HepG2 (cell line): ENCODE measurements at regions of chr21 and their contacts with region 1.

Region 1: GRCh38 chr21:34888569-34889319 is 160.4 kb downstream of the RUNX1 start:
- DNase-seq: peak; percentile 90
- ATAC-seq: peak; percentile 79
- H3K4me3 ChIP-seq: peak overlapping the region; percentile 86 to 96 (median 94)
- H3K27ac ChIP-seq: peak overlapping the region; percentile 87
- H3K4me1 ChIP-seq: peaks cover 16% of the 10 kb centered on the region
- H3K27me3 ChIP-seq: no peaks in the 10 kb centered on the region; a peak in 1 of 5 replicates
- CTCF ChIP-seq: no peak
- EP300 ChIP-seq: peak in 1 of 2 experiments; percentile 12; a peak in 1 of 4 replicates
- POLR2A ChIP-seq: peak in 1 of 2 experiments; percentile 97; a peak in 2 of 4 replicates
- RAD21 ChIP-seq: peak; percentile 37; the same call in 1 of the 2 replicates

Region 2: DNA sequence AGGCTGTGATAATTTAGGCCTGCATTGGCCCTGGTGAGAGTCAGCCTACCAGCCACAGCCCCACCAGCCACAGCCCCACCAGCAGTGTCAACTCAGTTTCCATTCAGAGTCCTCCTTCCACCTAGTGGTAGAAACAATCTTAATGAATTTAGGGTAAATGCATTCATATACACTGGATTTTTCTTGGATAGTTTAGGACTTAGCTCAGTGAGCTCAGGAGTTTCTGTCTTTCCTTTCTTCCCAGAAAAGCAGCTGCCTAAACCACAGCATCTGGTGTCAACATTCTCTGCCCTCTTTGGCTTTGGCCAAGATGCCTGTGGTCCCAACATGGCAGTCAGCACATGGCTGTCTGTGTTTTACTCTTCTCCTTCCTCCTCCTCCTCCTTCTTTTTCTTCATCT is 126.0 kb before region 1 on chr21:
- CTCF ChIA-PET with region 1: no interaction called
- POLR2A ChIA-PET with region 1: no interaction called
- in situ Hi-C with region 1: no loop called
- intact Hi-C with region 1: no loop called
- DNase-seq: no peak
- ATAC-seq: no peak
- H3K4me3 ChIP-seq: no peak overlapping the region
- H3K27ac ChIP-seq: no peak overlapping the region
- H3K4me1 ChIP-seq: peaks cover 12% of the 10 kb centered on the region
- H3K27me3 ChIP-seq: no peaks in the 10 kb centered on the region
- CTCF ChIP-seq: no peak
- EP300 ChIP-seq: no peak
- POLR2A ChIP-seq: no peak
- RAD21 ChIP-seq: no peak

Region 3: GRCh38 chr21:34795175-34795547 is 93.6 kb before region 1 on chr21:
- CTCF ChIA-PET with region 1: no interaction called
- POLR2A ChIA-PET with region 1: interaction called, 47 read pairs
- in situ Hi-C with region 1: loop called (anchors 5 kb)
- intact Hi-C with region 1: loop called (anchors 5 kb)
- DNase-seq: no peak
- ATAC-seq: no peak; the same call in 2 of the 3 replicates
- H3K4me3 ChIP-seq: peak overlapping the region in 1 of 3 experiments; percentile 4; a peak in 1 of 6 replicates
- H3K27ac ChIP-seq: peak overlapping the region; percentile 66
- H3K4me1 ChIP-seq: peaks cover 83% of the 10 kb centered on the region
- H3K27me3 ChIP-seq: no peaks in the 10 kb centered on the region
- CTCF ChIP-seq: 0 out of 2 replicates have a peak, but pooled peaks have one; percentile 11
- EP300 ChIP-seq: no peak
- POLR2A ChIP-seq: no peak
- RAD21 ChIP-seq: no peak

Region 4: GRCh38 chr21:34836103-34836932 is 52.4 kb before region 1 on chr21:
- CTCF ChIA-PET with region 1: no interaction called
- POLR2A ChIA-PET with region 1: interaction called, 92 read pairs
- in situ Hi-C with region 1: no loop called
- intact Hi-C with region 1: no loop called
- DNase-seq: peak; percentile 92
- ATAC-seq: peak; percentile 92
- H3K4me3 ChIP-seq: peak overlapping the region; percentile 19 to 45 (median 21)
- H3K27ac ChIP-seq: peak overlapping the region; percentile 92
- H3K4me1 ChIP-seq: peaks cover 54% of the 10 kb centered on the region
- H3K27me3 ChIP-seq: no peaks in the 10 kb centered on the region
- CTCF ChIP-seq: no peak
- EP300 ChIP-seq: peak; percentile 48 to 87; a peak in 2 of 4 replicates
- POLR2A ChIP-seq: peak in 1 of 2 experiments; percentile 37; a peak in 1 of 4 replicates
- RAD21 ChIP-seq: 0 out of 2 replicates have a peak, but pooled peaks have one; percentile 6

Region 5: GRCh38 chr21:34926803-34927467 is 38.2 kb after region 1 on chr21:
- CTCF ChIA-PET with region 1: no interaction called
- POLR2A ChIA-PET with region 1: no interaction called
- in situ Hi-C with region 1: no loop called
- intact Hi-C with region 1: no loop called
- DNase-seq: peak; percentile 72
- ATAC-seq: peak; percentile 97
- H3K4me3 ChIP-seq: peak overlapping the region in 1 of 3 experiments; percentile 9; a peak in 1 of 6 replicates
- H3K27ac ChIP-seq: no peak overlapping the region
- H3K4me1 ChIP-seq: peaks cover 28% of the 10 kb centered on the region
- H3K27me3 ChIP-seq: no peaks in the 10 kb centered on the region
- CTCF ChIP-seq: no peak
- EP300 ChIP-seq: 0 out of 4 replicates have a peak, but pooled peaks of 1 of the 2 experiments have one; percentile 3
- POLR2A ChIP-seq: no peak
- RAD21 ChIP-seq: no peak

Region 6: GRCh38 chr21:34986561-34987500 is 98.1 kb after region 1 on chr21:
- CTCF ChIA-PET with region 1: no interaction called
- POLR2A ChIA-PET with region 1: no interaction called
- in situ Hi-C with region 1: loop called (anchors 10 kb)
- intact Hi-C with region 1: no loop called
- DNase-seq: peak; percentile 84
- ATAC-seq: peak; percentile 69
- H3K4me3 ChIP-seq: no peak overlapping the region
- H3K27ac ChIP-seq: no peak overlapping the region
- H3K4me1 ChIP-seq: peaks cover 58% of the 10 kb centered on the region
- H3K27me3 ChIP-seq: no peaks in the 10 kb centered on the region
- CTCF ChIP-seq: no peak
- EP300 ChIP-seq: peak in 1 of 2 experiments; percentile 21; a peak in 1 of 4 replicates
- POLR2A ChIP-seq: no peak
- RAD21 ChIP-seq: no peak

Region 7: DNA sequence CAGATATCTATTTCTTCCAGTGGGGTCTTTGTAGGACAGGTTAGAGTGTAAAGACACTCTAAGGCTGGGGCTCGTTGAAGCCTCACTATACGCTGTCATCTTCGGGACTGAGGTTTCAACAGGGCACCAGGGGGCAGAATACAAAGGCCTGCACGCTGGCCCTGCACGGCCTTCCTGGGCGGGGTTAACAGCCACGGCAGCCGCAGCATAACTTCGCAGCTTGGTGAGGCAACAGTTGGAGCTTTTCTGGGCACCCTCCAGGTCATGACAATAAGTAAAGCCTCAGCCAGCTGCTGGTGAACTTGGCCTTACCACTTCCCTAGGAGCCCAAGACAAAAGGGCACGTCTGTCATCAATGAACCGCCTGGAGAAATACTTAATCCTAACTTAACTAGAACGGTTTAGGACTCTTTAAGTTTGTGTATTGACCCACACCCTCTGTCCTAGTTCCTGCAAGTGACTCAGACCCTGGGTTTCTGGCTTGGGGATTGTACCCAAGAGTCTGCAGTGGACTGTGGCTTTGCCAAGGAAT is 162.6 kb after region 1 on chr21:
- CTCF ChIA-PET with region 1: interaction called, 3 read pairs
- POLR2A ChIA-PET with region 1: interaction called, 7 read pairs
- in situ Hi-C with region 1: no loop called
- intact Hi-C with region 1: loop called (anchors 5 kb)
- DNase-seq: peak; percentile 82
- ATAC-seq: peak; percentile 99
- H3K4me3 ChIP-seq: peak overlapping the region in 2 of 3 experiments; percentile 26 to 32; a peak in 1 of 6 replicates
- H3K27ac ChIP-seq: no peak overlapping the region
- H3K4me1 ChIP-seq: peaks cover 45% of the 10 kb centered on the region
- H3K27me3 ChIP-seq: no peaks in the 10 kb centered on the region
- CTCF ChIP-seq: peak; percentile 88
- EP300 ChIP-seq: peak in 1 of 2 experiments; percentile 19; a peak in 1 of 4 replicates
- POLR2A ChIP-seq: no peak
- RAD21 ChIP-seq: peak; percentile 83

Region 8: GRCh38 chr21:35840197-35840799 is 951.6 kb after region 1 on chr21:
- CTCF ChIA-PET with region 1: no interaction called
- POLR2A ChIA-PET with region 1: interaction called, 5 read pairs
- in situ Hi-C with region 1: loop called (anchors 25 kb)
- intact Hi-C with region 1: loop called (anchors 2 kb)
- DNase-seq: peak; percentile 50
- ATAC-seq: peak; percentile 50; the same call in 1 of the 3 replicates
- H3K4me3 ChIP-seq: no peak overlapping the region
- H3K27ac ChIP-seq: no peak overlapping the region
- H3K4me1 ChIP-seq: no peaks in the 10 kb centered on the region
- H3K27me3 ChIP-seq: no peaks in the 10 kb centered on the region
- CTCF ChIP-seq: peak; percentile 69
- EP300 ChIP-seq: no peak
- POLR2A ChIP-seq: no peak
- RAD21 ChIP-seq: peak; percentile 47; the same call in 1 of the 2 replicates

Region 9: DNA sequence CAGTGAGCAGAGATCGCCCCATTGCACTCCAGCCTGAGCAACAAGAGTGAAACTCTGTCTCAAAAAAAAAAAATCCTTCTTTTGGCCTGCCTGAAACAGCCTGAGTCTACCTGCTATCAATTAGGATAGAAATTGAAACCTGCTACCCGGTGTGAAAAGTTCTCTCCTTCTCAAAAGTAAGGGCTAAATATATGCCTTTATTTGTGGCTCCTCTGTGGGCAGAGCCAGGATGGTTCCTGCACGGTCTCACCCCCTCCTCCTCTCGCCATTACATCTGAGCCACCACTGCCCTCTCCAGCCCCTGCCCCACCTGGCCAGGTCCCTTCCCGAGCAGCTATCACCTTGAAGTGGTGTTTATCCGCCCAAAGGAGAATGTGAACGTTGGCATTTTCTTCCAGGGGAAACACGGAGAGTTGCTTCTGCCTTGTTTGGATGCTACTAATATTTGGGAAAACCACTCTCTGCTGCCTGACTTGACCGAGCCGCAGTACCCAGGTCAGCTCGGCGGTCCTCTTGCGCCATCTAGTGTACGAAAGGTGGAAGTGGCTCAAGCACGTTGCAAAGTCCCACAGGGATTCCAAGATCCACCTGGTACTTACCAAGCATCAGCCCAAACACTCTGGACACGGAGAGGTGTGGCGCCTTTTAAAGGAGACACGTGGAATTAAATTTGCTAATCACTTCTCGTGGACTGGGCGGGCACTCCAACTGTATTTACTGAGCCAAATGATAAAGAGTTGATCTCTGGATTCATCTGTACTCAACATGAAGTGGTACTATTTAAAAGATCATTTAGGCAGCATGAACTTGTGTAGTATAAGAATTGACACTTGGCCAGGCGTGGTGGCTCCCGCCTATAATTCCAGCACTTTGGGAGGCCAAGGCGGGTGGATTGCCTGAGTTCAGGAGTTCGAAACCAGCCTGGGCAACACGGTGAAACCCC is 1139.7 kb after region 1 on chr21:
- CTCF ChIA-PET with region 1: no interaction called
- POLR2A ChIA-PET with region 1: no interaction called
- in situ Hi-C with region 1: no loop called
- intact Hi-C with region 1: loop called (anchors 10 kb)
- DNase-seq: peak; percentile 47
- ATAC-seq: peak; percentile 92
- H3K4me3 ChIP-seq: no peak overlapping the region
- H3K27ac ChIP-seq: no peak overlapping the region
- H3K4me1 ChIP-seq: peaks cover 6% of the 10 kb centered on the region; the same call in 1 of the 2 replicates
- H3K27me3 ChIP-seq: no peaks in the 10 kb centered on the region
- CTCF ChIP-seq: peak; percentile 97
- EP300 ChIP-seq: no peak
- POLR2A ChIP-seq: no peak
- RAD21 ChIP-seq: peak; percentile 89